ENCODE measurements at regions of chr16 and their contacts with region 1.

Region 1: DNA sequence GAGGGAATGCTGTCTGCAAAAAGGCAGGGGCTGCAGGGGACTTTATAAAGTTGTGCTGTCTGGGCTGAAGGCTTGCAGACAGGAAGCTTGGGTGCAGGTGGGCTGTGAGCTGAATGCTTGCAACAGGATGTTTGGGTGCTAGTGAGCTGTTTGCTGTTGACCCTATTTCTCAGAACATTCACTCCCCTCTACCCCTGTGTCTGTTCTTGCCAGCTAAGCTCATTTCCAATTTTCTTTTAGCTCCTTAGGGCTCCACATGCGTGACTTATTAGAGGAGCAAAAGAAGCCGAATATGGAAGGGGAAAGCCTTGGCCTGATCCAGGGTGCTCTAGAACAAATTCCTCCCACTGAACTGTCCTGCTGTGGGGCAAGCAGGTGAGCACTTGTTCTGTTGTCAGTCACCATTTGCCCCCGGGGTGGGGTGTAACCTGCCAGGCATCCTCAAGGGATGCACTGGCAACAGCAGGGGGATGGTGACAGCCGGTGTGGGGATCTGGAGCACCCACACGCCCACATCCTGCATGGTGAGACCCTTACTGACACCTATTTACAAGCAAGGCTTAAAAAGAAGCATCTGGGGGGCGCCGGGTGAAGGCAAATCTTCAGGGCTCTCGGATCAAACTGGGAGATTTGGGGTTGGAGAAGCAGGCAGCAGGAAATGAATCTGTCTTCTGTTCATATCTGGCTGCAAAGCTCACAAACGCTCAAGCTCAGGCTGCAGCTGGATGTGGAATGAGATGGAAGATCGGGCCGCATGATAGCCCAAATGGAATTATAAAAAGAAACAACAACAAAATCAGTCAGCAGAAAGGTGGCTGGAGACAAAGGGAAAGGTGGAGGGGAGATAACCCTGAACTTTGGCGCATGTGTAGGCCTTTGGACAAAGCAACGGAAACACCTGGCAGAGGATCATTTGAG is 21.1 kb upstream of the NUP93 start:
- DNase-seq: no peak
- H3K4me3 ChIP-seq: no peak overlapping the region
- H3K27ac ChIP-seq: no peak overlapping the region
- H3K4me1 ChIP-seq: no peaks in the 10 kb centered on the region
- H3K27me3 ChIP-seq: no peaks in the 10 kb centered on the region
- CTCF ChIP-seq: no peak
- POLR2A ChIP-seq: no peak

Region 2: GRCh38 chr16:56519459-56520250 is 189.1 kb before region 1 on chr16 and contains the start of gene BBS2:
- intact Hi-C with region 1: loop called (anchors 10 kb)
- DNase-seq: peak; percentile 83 to 90
- H3K4me3 ChIP-seq: peak within 1 kb of the TSS; percentile 77 to 89
- H3K27ac ChIP-seq: peak within 1 kb of the TSS; percentile 84 to 86
- H3K4me1 ChIP-seq: peaks cover 0 to 4% of the 10 kb centered on the region in 2 donors
- H3K27me3 ChIP-seq: no peaks in the 10 kb centered on the region
- CTCF ChIP-seq: peak in 2 of 4 experiments; percentile 9 to 11
- POLR2A ChIP-seq: peak; percentile 59 to 84
- total RNA-seq, gene BBS2: 44.1 to 209 (median 82.8) TPM

Region 3: GRCh38 chr16:56576585-56577293 is 132.0 kb before region 1 on chr16:
- intact Hi-C with region 1: loop called (anchors 10 kb)
- DNase-seq: peak; percentile 53 to 69
- H3K4me3 ChIP-seq: no peak overlapping the region
- H3K27ac ChIP-seq: no peak overlapping the region
- H3K4me1 ChIP-seq: no peaks in the 10 kb centered on the region
- H3K27me3 ChIP-seq: no peaks in the 10 kb centered on the region
- CTCF ChIP-seq: peak; percentile 52 to 72 (median 66)
- POLR2A ChIP-seq: no peak

Region 4: GRCh38 chr16:56657555-56658326 is 51.0 kb before region 1 on chr16 and contains the start of gene MT1F:
- intact Hi-C with region 1: no loop called
- DNase-seq: peak; percentile 36 to 55
- H3K4me3 ChIP-seq: peak within 1 kb of the TSS; percentile 12 to 22
- H3K27ac ChIP-seq: no peak within 1 kb of the TSS
- H3K4me1 ChIP-seq: peaks cover 0 to 5% of the 10 kb centered on the region in 2 donors
- H3K27me3 ChIP-seq: peaks cover 0 to 12% of the 10 kb centered on the region in 2 donors
- CTCF ChIP-seq: no peak
- POLR2A ChIP-seq: no peak
- total RNA-seq, gene MT1F: 2.1 TPM in 1 of 4 donors, not detected in the others